ENCODE measurements at regions of chr22 and their contacts with region 1.

Region 1: GRCh38 chr22:44026630-44027511 is 2.8 kb downstream of the PARVB start:
- DNase-seq: peak; percentile 79
- ATAC-seq: peak; percentile 55
- H3K4me3 Mint-ChIP-seq: peak overlapping the region; percentile 83
- H3K27ac Mint-ChIP-seq: peak overlapping the region; percentile 100
- H3K4me1 Mint-ChIP-seq: peaks cover 82% of the 10 kb centered on the region
- H3K27me3 Mint-ChIP-seq: no peaks in the 10 kb centered on the region
- CTCF ChIP-seq: no peak

Region 2: DNA sequence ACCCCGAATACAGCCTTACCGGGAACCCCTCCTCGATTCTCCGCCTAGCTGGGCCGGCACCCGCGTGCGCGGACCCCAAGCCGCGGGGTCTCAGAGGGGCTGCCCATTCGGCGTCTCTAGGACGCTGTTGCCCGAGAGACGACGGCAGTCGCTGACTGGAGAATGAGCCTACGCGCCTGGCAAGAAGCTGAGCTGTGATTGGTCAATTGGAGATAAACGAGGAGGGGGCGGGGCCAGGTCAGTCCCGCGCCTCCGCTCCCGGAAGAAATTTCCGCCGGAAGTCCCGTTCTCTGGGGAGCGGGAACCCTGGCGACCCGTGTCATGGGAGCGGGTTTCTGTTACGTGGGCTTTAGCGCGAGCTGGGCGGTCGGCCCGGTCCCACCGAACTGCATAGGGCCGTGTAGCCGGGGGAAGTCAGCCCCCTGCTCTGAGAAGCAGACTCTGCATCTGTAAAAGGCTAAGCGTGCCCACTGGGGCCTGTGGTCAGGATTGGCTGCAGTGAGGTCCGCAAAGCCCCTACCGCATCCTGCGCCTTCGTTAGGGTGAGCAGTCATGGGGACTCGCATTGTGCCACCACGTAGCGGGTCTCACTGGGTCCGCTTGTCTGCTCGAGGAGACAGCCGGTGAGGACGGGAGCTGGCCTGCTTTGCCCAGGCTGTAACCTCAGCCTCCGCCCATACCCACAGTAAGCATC is 214.6 kb before region 1 on chr22 and contains the start of gene EFCAB6:
- CTCF ChIA-PET with region 1: no interaction called
- POLR2A ChIA-PET with region 1: interaction called, 3 read pairs
- intact Hi-C with region 1: loop called (anchors 1 kb)
- DNase-seq: peak; percentile 80
- ATAC-seq: peak; percentile 94
- H3K4me3 Mint-ChIP-seq: peak within 1 kb of the TSS; percentile 92
- H3K27ac Mint-ChIP-seq: peak within 1 kb of the TSS; percentile 84
- H3K4me1 Mint-ChIP-seq: peaks cover 16% of the 10 kb centered on the region
- H3K27me3 Mint-ChIP-seq: peaks cover 7% of the 10 kb centered on the region
- CTCF ChIP-seq: no peak
- total RNA-seq, gene EFCAB6: 0.46 TPM in 1 of 2 replicates, not detected in the other

Region 3: GRCh38 chr22:43955040-43955882 is 71.6 kb before region 1 on chr22 and contains the start of gene SAMM50:
- CTCF ChIA-PET with region 1: no interaction called
- POLR2A ChIA-PET with region 1: interaction called, 9 read pairs
- intact Hi-C with region 1: loop called (anchors 1 kb)
- DNase-seq: peak; percentile 86
- ATAC-seq: peak; percentile 95
- H3K4me3 Mint-ChIP-seq: peak within 1 kb of the TSS; percentile 96
- H3K27ac Mint-ChIP-seq: peak within 1 kb of the TSS; percentile 94
- H3K4me1 Mint-ChIP-seq: peaks cover 33% of the 10 kb centered on the region
- H3K27me3 Mint-ChIP-seq: peaks cover 3% of the 10 kb centered on the region
- CTCF ChIP-seq: no peak
- total RNA-seq, gene SAMM50: 49.6 and 51.2 TPM in 2 replicates

Region 4: DNA sequence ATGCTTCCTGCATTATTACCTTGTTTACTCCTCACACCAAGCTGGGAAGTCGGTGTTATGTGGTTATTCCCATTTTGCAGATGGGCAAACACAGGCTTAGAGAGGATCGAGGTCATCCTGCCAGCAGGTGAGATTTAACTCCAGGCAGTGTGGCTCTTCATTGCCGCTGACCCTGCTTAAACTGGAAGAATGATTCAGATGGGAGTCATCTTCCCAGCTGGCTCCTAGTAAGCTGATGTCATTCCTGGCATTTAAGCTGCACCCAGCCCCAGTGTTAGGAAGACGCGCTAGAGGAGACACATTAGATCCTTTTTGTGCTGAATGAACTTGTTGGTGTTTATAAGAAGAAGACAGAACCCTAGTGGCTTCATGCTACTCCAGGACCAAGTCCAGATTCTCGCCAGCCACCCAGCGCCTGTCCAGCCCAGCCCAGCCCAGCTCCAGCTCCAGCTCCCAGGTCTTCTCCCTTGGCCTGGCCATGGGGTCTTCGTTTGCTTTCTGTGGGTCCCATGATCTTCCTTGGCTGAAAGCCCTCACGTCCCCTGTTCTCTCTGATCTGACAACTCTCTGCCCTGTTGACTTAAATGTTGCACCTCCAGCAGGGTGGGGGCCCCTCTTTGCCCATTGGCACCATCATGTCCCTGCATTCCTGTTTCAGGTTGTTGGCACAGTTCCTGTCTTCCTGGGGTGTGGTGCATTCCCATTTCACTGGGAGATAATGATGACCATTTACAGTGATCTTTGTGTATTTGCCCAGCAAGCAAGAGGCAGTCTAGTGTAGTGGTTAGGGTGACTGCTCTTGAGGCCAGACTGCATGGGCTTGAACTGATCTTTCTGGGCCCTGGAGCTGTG is 10.9 kb after region 1 on chr22:
- CTCF ChIA-PET with region 1: interaction called, 7 read pairs
- POLR2A ChIA-PET with region 1: interaction called, 21 read pairs
- intact Hi-C with region 1: loop called (anchors 1 kb)
- DNase-seq: no peak
- ATAC-seq: no peak
- H3K4me3 Mint-ChIP-seq: no peak overlapping the region
- H3K27ac Mint-ChIP-seq: no peak overlapping the region
- H3K4me1 Mint-ChIP-seq: peaks cover 17% of the 10 kb centered on the region
- H3K27me3 Mint-ChIP-seq: no peaks in the 10 kb centered on the region
- CTCF ChIP-seq: no peak

Region 5: DNA sequence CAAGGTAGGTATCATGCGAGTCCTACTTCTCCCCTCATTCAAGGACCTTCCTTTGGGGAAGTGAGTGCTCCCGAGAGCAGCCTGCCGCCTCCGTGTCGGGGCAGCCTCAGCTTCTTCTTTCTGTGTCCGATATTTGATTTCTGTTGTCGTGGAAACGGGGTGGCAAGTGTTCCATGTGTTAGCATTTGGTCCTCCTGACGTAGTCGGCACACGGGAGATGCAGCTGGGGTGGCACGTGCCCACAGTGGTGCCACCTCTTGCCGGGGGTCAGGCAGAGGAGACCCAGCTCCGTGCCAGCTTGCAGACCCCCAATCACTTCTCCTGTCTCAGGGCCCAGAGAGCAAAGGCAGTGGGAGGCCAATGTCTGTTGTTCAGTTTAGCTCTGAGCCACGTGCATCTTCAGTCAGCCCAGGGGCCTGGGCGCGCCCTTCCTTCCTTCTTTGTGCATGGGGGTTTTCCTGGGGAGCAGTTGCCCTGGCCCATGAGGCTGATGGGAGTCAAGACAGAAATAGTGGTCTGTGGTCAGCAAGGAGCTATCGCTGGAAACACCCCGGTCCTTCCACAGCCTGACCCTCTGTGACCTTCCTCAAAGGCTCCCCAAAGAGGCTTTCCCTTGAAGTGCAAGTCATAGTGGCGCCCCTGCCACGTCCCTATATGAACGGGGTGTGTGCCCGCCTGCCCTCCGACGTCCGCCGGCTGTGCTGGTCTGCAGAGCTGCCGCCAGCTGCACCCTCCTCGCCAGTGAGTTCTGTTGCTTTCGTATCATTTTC is 41.7 kb after region 1 on chr22:
- CTCF ChIA-PET with region 1: interaction called, 3 read pairs
- POLR2A ChIA-PET with region 1: interaction called, 52 read pairs
- intact Hi-C with region 1: loop called (anchors 1 kb)
- DNase-seq: peak; percentile 56
- ATAC-seq: peak; percentile 62
- H3K4me3 Mint-ChIP-seq: peak overlapping the region; percentile 76
- H3K27ac Mint-ChIP-seq: peak overlapping the region; percentile 94
- H3K4me1 Mint-ChIP-seq: peaks cover 65% of the 10 kb centered on the region
- H3K27me3 Mint-ChIP-seq: no peaks in the 10 kb centered on the region
- CTCF ChIP-seq: no peak

Region 6: DNA sequence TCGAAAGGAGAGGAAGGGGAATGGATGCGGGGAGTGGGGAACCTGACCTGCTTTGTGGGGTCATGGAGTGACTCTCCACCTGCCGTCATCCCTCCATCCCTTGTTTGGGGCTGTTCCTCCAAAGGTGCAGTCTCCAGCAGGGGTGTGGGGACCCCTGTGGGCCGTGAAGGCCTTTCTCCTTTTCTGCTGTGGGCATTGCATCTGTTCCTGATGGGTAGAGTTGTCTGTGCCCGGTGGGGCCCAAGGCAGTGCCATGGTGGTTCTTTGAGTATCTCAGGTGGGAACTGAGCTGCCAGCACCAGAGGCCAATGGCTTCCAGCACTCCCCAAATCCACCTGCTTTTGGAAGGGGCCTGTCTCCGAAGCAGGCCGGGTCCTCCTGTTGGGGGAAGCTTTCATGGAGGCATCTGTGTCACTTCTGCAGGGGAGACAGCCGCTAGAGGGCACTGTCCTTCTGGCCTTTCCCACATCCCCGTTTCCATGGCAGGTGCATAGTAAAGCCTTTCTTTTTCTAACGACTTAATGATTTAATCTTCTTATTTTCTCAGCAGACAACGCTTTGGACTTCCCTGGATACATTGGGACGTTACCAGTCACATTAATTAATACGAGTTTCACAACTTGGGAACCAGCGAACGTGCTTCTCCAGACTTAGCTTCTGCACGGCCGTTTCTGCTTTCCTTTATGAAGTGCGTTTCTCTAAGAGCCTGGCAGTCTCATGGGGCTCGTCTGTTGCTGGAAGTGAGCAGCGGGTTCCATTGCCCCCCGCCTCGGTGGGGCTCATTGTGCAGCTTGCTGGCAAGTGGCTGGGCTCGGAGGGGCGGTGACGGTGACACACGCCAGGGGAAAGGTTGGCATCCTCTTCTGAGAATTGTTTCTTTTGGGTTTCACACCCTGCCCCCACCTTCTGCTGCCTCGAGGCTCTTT is 54.3 kb after region 1 on chr22:
- CTCF ChIA-PET with region 1: interaction called, 9 read pairs
- POLR2A ChIA-PET with region 1: interaction called, 7 read pairs
- intact Hi-C with region 1: loop called (anchors 1 kb)
- DNase-seq: peak; percentile 55
- ATAC-seq: peak; percentile 49
- H3K4me3 Mint-ChIP-seq: no peak overlapping the region
- H3K27ac Mint-ChIP-seq: no peak overlapping the region
- H3K4me1 Mint-ChIP-seq: peaks cover 4% of the 10 kb centered on the region
- H3K27me3 Mint-ChIP-seq: no peaks in the 10 kb centered on the region
- CTCF ChIP-seq: peak; percentile 19

Measured in activated B cell treated with CpG ODN at 0.5 μM for 24 hours (primary cell).